Natural killer cell (primary cell): ENCODE measurements at regions of chr14 and their contacts with region 1.

Region 1: DNA sequence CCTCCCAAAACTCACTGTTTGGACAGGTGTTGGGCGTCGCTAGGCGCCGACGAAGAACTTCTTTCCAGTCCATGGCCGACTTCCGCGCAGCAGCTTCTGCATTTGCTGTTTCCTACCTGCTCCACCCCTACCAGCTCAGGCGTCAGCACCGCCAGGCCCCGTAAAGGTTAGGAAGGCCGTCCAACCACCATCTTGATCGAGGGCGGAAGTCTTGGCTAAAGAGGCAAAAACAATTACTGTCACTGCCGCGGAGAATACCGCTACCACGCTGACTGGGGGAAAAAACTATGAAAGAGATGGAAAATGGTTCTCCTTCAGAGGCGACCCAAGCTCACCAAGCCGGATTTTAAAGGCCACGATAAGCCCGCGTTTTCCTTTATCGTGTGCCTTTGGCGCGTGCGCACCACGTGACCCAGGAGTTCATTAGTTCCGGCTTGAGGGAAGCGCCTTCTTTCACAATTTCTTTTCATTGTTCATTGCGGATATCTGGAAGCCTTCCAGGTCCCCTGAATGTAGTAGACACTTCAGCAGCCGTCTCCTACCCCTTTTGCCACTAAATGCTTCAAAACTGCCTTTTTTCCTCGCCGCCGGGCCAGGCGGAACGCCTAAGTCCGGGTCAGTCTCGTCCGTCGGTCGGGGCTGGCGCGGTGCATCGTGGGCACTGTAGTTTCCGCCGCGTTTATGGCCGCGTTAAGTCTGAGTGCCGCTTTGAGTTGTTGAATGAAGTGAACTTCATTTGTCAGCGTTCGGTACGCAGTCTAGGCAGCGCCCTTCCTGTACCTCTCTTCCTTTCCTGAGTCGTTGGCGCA is at the starts of genes PPP2R3C and PRORP:
- DNase-seq: peak; percentile 81 to 96
- ATAC-seq: peak; percentile 83 to 94 (median 85)
- H3K4me3 ChIP-seq: peak within 1 kb of the TSS; percentile 72
- H3K4me3 Mint-ChIP-seq: peak within 1 kb of the TSS; percentile 97
- H3K27ac ChIP-seq: peak within 1 kb of the TSS; percentile 96
- H3K27ac Mint-ChIP-seq: peak within 1 kb of the TSS; percentile 99
- H3K4me1 ChIP-seq: peaks cover 33% of the 10 kb centered on the region
- H3K4me1 Mint-ChIP-seq: peaks cover 56 to 60% of the 10 kb centered on the region in 2 donors
- H3K27me3 ChIP-seq: no peaks in the 10 kb centered on the region
- H3K27me3 Mint-ChIP-seq: no peaks in the 10 kb centered on the region
- CTCF ChIP-seq: no peak
- total RNA-seq, gene PPP2R3C: 41.5 to 49.7 (median 48.3) TPM
- total RNA-seq, gene PRORP: 18.3 to 35.8 (median 20.5) TPM

Region 2: GRCh38 chr14:34331728-34332623 is 790.1 kb before region 1 on chr14:
- intact Hi-C with region 1: no loop called
- DNase-seq: peak; percentile 30 to 70
- ATAC-seq: peak; percentile 58 to 76 (median 69)
- H3K4me3 ChIP-seq: no peak overlapping the region
- H3K4me3 Mint-ChIP-seq: no peak overlapping the region
- H3K27ac ChIP-seq: no peak overlapping the region
- H3K27ac Mint-ChIP-seq: no peak overlapping the region
- H3K4me1 ChIP-seq: no peaks in the 10 kb centered on the region
- H3K4me1 Mint-ChIP-seq: peaks cover 8 to 16% of the 10 kb centered on the region in 2 donors
- H3K27me3 ChIP-seq: no peaks in the 10 kb centered on the region
- H3K27me3 Mint-ChIP-seq: no peaks in the 10 kb centered on the region
- CTCF ChIP-seq: peak; percentile 78

Region 3: GRCh38 chr14:34888186-34888585 is 233.9 kb before region 1 on chr14:
- intact Hi-C with region 1: no loop called
- DNase-seq: no peak
- ATAC-seq: no peak
- H3K4me3 ChIP-seq: no peak overlapping the region
- H3K4me3 Mint-ChIP-seq: no peak overlapping the region
- H3K27ac ChIP-seq: no peak overlapping the region
- H3K27ac Mint-ChIP-seq: no peak overlapping the region
- H3K4me1 ChIP-seq: no peaks in the 10 kb centered on the region
- H3K4me1 Mint-ChIP-seq: no peaks in the 10 kb centered on the region
- H3K27me3 ChIP-seq: no peaks in the 10 kb centered on the region
- H3K27me3 Mint-ChIP-seq: no peaks in the 10 kb centered on the region
- CTCF ChIP-seq: no peak

Region 4: DNA sequence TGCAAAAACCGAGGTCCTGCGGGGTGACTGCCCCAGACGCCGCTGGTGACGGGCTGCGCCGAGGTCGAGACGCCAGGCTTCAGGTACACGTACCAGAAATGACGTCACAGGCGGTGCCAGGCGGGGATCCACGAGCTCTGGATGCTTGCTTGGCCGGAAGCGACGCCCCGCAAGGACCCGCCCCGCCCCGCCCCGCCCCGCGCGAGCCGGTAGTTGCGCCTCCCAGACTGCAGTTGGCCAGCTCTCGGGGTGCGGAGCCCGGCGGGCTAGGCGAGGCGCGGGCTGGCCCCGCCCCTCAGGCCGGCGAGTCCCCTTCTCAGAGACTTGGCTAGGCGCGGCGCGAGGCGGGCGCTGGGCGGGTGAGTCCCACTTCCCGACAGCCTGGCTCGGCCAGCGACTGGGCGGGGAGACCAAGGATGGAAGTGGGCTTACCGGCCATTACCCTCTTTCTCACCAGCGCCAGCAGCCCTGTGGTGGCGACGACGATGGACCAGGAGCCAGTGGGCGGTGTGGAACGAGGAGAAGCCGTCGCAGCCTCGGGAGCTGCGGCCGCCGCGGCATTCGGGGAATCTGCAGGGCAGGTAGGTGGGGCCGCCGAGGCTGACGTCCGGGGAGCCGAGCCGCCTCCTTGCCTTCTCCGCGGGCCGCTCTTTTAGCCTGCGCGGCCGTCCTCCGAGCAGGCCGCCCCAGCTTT is 75.9 kb before region 1 on chr14 and contains the start of gene FAM177A1:
- intact Hi-C with region 1: loop called (anchors 2 kb)
- DNase-seq: peak; percentile 94 to 100
- ATAC-seq: peak; percentile 86 to 96 (median 87)
- H3K4me3 ChIP-seq: peak within 1 kb of the TSS; percentile 97
- H3K4me3 Mint-ChIP-seq: peak within 1 kb of the TSS; percentile 97
- H3K27ac ChIP-seq: peak within 1 kb of the TSS; percentile 100
- H3K27ac Mint-ChIP-seq: peak within 1 kb of the TSS; percentile 91 to 93
- H3K4me1 ChIP-seq: peaks cover 11% of the 10 kb centered on the region
- H3K4me1 Mint-ChIP-seq: peaks cover 25 to 31% of the 10 kb centered on the region in 2 donors
- H3K27me3 ChIP-seq: no peaks in the 10 kb centered on the region
- H3K27me3 Mint-ChIP-seq: no peaks in the 10 kb centered on the region
- CTCF ChIP-seq: no peak
- total RNA-seq, gene FAM177A1: 73.8 to 131 (median 79.6) TPM

Region 5: GRCh38 chr14:35292051-35292769 is 170.1 kb after region 1 on chr14 and contains the start of gene PSMA6:
- intact Hi-C with region 1: loop called (anchors 1 kb)
- DNase-seq: peak; percentile 96 to 100
- ATAC-seq: peak; percentile 91 to 97 (median 92)
- H3K4me3 ChIP-seq: peak within 1 kb of the TSS; percentile 63
- H3K4me3 Mint-ChIP-seq: peak within 1 kb of the TSS; percentile 97
- H3K27ac ChIP-seq: peak within 1 kb of the TSS; percentile 81
- H3K27ac Mint-ChIP-seq: peak within 1 kb of the TSS; percentile 98 to 99
- H3K4me1 ChIP-seq: peaks cover 31% of the 10 kb centered on the region
- H3K4me1 Mint-ChIP-seq: peaks cover 43 to 45% of the 10 kb centered on the region in 2 donors
- H3K27me3 ChIP-seq: no peaks in the 10 kb centered on the region
- H3K27me3 Mint-ChIP-seq: no peaks in the 10 kb centered on the region
- CTCF ChIP-seq: no peak
- total RNA-seq, gene PSMA6: 130 to 141 (median 139) TPM

Region 6: DNA sequence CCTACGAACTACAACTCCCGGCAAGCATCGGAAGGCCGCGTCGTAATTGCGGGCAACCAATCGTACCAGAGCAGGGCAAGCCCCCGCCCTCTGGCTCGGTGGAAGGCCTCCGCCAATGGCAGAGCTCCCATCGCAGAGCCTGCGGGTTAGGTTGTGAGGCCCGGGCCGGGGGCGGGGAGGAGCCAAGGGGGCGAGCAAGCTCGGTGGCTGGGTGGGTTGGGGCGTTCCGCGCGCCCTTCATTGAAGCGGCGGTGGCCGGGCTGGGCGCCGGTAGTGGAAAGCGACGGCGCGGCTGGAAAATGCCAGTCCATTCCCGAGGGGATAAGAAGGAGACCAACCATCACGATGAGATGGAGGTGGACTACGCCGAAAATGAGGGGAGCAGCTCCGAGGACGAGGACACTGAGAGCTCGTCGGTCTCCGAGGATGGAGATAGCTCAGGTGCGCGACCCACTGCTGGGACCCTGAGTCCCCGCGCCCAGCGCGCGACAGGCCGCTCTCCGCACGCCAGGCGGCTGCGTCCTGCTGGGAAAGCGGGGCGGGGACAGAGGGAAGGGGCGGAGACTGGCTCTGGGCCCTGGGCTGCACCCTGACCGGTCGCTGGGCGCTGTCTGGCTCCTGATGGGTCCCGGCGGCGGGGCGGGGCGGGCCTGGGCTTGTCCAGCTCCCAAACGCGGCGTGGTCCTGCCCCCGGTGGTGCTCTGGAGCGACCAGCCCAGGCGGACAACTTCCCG is 704.3 kb after region 1 on chr14 and contains the start of gene BRMS1L:
- intact Hi-C with region 1: loop called (anchors 5 kb)
- DNase-seq: peak; percentile 91 to 97
- ATAC-seq: peak; percentile 97 to 100 (median 98)
- H3K4me3 ChIP-seq: peak within 1 kb of the TSS; percentile 99
- H3K4me3 Mint-ChIP-seq: peak within 1 kb of the TSS; percentile 94
- H3K27ac ChIP-seq: peak within 1 kb of the TSS; percentile 89
- H3K27ac Mint-ChIP-seq: peak within 1 kb of the TSS; percentile 72 to 86
- H3K4me1 ChIP-seq: peaks cover 7% of the 10 kb centered on the region
- H3K4me1 Mint-ChIP-seq: peaks cover 12 to 21% of the 10 kb centered on the region in 2 donors
- H3K27me3 ChIP-seq: no peaks in the 10 kb centered on the region
- H3K27me3 Mint-ChIP-seq: no peaks in the 10 kb centered on the region
- CTCF ChIP-seq: no peak
- total RNA-seq, gene BRMS1L: 5.1 to 9.4 (median 6.3) TPM